MCF 10A (cell line): ENCODE measurements at regions of chr22 and their contacts with region 1.

Region 1: DNA sequence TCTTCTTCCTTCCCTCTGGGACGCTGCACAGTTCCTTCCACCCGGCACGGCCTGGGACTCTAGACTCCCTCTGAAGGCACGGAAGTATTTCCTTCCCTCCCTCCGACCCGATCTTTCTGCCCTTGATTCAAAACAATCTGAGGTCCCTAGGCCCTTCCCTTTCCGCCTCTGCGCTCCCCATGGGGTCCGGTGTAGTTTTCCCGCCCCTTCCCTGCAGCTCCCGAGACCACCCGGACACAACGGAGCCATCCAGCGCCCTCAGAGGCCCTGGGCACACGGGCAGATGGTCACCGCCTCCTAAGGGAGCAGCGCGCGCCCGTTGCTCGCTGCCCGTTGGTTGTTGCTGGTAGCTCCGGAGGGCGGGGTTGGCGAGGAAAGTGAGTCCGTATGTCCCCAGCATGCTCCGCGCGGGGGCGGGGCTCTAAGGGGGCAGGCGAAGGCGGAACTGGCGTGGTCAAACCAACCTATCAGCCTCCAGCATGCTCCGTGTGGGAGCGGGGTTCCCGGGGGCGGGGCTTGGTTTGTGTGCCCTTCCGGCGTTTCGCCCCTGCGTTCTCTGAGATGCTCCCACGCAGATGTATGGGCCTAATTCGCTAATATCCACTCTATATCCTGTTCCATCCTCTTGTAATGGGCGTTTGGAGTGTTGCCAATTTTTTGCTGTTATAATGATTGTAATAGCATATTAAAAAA is 19.6 kb downstream of the MIF start:
- DNase-seq: peak; percentile 99
- H3K4me3 Mint-ChIP-seq: peak overlapping the region; percentile 79
- H3K27ac Mint-ChIP-seq: peak overlapping the region; percentile 91
- H3K4me1 Mint-ChIP-seq: peaks cover 7% of the 10 kb centered on the region
- H3K27me3 Mint-ChIP-seq: no peaks in the 10 kb centered on the region
- CTCF ChIP-seq: no peak

Region 2: DNA sequence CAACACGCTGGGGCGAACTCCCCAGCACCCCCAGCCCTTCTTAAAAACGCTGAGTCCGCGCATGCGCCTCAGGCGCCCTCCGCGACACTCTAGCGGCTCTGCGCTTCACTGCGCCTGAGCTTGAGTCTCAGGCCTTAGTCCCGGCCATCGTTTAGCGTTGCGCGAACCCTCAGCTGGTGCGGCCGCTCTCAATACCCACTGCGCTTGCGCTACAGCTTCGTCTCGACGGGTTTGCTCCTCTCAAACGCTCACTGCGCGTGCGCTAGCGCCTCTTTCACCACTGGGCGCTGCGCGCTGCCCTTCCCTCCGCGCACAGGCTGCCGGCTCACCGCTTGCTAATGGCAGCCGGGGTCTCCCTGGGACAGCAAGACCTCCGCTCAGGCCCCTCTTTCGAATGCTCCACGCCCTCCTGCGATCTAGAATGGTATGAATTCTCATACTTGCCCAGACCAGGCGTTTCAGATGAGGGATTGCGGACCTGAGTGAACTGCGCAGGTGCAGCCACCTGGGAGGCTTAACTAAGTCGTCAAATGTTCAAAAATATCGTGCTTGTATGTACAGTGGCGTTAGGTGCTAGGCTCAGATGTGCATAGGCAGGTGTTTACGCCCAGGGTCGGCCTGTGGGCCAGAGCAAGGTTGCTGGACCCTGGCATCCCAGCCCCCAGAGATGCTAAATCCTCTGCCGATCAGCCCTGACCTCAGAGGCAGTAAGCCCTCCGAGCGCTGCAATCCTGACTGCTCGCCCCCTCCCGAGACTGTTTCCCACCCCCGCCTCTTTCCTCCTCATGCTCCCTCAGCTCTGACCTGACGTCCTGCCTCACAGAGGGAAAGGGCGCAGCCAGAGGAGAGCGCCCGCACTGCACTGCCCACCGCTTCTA is 56.0 kb before region 1 on chr22 and contains the start of gene SLC2A11:
- CTCF ChIA-PET with region 1: interaction called, 3 read pairs
- POLR2A ChIA-PET with region 1: interaction called, 10 read pairs
- intact Hi-C with region 1: no loop called
- DNase-seq: peak; percentile 97
- H3K4me3 Mint-ChIP-seq: peak within 1 kb of the TSS; percentile 77
- H3K27ac Mint-ChIP-seq: peak within 1 kb of the TSS; percentile 57
- H3K4me1 Mint-ChIP-seq: peaks cover 8% of the 10 kb centered on the region
- H3K27me3 Mint-ChIP-seq: no peaks in the 10 kb centered on the region
- CTCF ChIP-seq: peak; percentile 7
- total RNA-seq, gene SLC2A11: 9.6 and 11.3 TPM in 2 replicates